ENCODE measurements at regions of chr13 and their contacts with region 1.

Region 1: GRCh38 chr13:88074794-88075510 is 403.8 kb downstream of the SLITRK5 start:
- DNase-seq: no peak
- ATAC-seq: no peak
- H3K4me3 ChIP-seq: no peak overlapping the region
- H3K27ac ChIP-seq: no peak overlapping the region
- H3K4me1 ChIP-seq: no peaks in the 10 kb centered on the region
- H3K27me3 ChIP-seq: no peaks in the 10 kb centered on the region
- CTCF ChIP-seq: no peak
- POLR2A ChIP-seq: no peak
- RAD21 ChIP-seq: no peak

Region 2: DNA sequence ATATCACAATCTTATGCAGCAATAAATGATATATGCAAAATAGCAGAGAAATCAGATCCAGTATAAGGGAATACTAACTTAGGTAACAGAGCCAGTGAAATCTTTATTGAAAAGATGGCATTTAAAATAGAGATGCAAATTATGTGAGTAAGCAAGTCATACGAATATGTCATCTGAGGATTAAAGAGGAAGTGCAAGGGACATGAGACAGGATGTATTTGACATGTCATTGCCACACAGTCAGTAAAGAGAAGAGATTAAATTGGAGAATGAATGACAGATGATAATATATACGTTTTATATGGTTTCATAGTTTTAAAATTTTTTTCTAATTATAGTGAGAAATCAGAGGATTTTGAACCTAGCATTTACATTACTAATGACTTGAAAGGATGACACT is 22.6 kb after region 1 on chr13:
- CTCF ChIA-PET with region 1: no interaction called
- POLR2A ChIA-PET with region 1: no interaction called
- dilution Hi-C with region 1: no loop called
- in situ Hi-C with region 1: no loop called
- intact Hi-C with region 1: loop called (anchors 1 kb)
- DNase-seq: no peak
- ATAC-seq: no peak
- H3K4me3 ChIP-seq: no peak overlapping the region
- H3K27ac ChIP-seq: no peak overlapping the region
- H3K4me1 ChIP-seq: no peaks in the 10 kb centered on the region
- H3K27me3 ChIP-seq: no peaks in the 10 kb centered on the region
- CTCF ChIP-seq: no peak
- POLR2A ChIP-seq: no peak
- RAD21 ChIP-seq: no peak

Region 3: GRCh38 chr13:88685459-88685858 is 610.5 kb after region 1 on chr13:
- CTCF ChIA-PET with region 1: no interaction called
- POLR2A ChIA-PET with region 1: no interaction called
- dilution Hi-C with region 1: no loop called
- in situ Hi-C with region 1: no loop called
- intact Hi-C with region 1: no loop called
- DNase-seq: no peak
- ATAC-seq: no peak
- H3K4me3 ChIP-seq: no peak overlapping the region
- H3K27ac ChIP-seq: no peak overlapping the region
- H3K4me1 ChIP-seq: no peaks in the 10 kb centered on the region
- H3K27me3 ChIP-seq: no peaks in the 10 kb centered on the region
- CTCF ChIP-seq: no peak
- POLR2A ChIP-seq: no peak
- RAD21 ChIP-seq: no peak